ENCODE measurements at regions of chr4 and their contacts with region 1.

Region 1: GRCh38 chr4:62709618-62710252 is 1509.6 kb downstream of the ADGRL3 start:
- DNase-seq: no peak
- H3K4me3 ChIP-seq: no peak overlapping the region
- H3K27ac ChIP-seq: no peak overlapping the region
- H3K4me1 ChIP-seq: no peaks in the 10 kb centered on the region
- H3K27me3 ChIP-seq: no peaks in the 10 kb centered on the region
- CTCF ChIP-seq: no peak
- POLR2A ChIP-seq: no peak

Region 2: GRCh38 chr4:60805500-60806313 is 1904.0 kb before region 1 on chr4:
- CTCF ChIA-PET with region 1: no interaction called
- POLR2A ChIA-PET with region 1: no interaction called
- dilution Hi-C with region 1: no loop called
- intact Hi-C with region 1: loop called (anchors 10 kb)
- DNase-seq: no peak
- H3K4me3 ChIP-seq: no peak overlapping the region
- H3K27ac ChIP-seq: no peak overlapping the region
- H3K4me1 ChIP-seq: no peaks in the 10 kb centered on the region
- H3K27me3 ChIP-seq: no peaks in the 10 kb centered on the region
- CTCF ChIP-seq: peak in 1 of 2 donors; percentile 13
- POLR2A ChIP-seq: no peak

Region 3: DNA sequence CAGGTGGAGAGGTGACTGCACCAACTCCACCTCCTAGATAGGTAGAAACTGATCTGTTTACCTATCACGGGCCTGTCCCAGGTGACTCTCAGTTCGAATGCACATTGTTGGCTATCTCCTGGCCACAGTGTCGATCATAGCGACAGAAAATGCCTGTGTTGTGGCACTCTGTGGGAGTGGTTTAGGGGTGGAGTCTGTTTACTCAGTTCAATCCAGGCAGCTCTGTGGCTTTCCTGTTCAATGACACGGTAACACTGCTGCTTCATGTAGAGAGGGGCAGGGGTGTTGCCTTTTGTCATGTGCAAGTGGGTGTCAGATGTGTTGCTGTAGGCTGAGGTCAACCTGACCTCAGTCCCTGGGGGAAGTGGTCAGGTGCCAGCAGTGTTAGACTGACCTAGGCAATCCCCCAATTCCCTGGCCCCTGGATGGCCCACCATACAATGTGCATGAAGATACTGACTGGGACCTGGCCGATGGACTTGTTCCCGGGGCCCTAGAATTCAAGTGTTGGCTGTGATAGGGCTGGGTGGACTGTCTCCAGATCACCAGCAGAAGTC is 97.2 kb after region 1 on chr4:
- CTCF ChIA-PET with region 1: no interaction called
- POLR2A ChIA-PET with region 1: no interaction called
- dilution Hi-C with region 1: no loop called
- intact Hi-C with region 1: no loop called
- DNase-seq: no peak
- H3K4me3 ChIP-seq: no peak overlapping the region
- H3K27ac ChIP-seq: no peak overlapping the region
- H3K4me1 ChIP-seq: no peaks in the 10 kb centered on the region
- H3K27me3 ChIP-seq: no peaks in the 10 kb centered on the region
- CTCF ChIP-seq: no peak
- POLR2A ChIP-seq: no peak

Region 4: DNA sequence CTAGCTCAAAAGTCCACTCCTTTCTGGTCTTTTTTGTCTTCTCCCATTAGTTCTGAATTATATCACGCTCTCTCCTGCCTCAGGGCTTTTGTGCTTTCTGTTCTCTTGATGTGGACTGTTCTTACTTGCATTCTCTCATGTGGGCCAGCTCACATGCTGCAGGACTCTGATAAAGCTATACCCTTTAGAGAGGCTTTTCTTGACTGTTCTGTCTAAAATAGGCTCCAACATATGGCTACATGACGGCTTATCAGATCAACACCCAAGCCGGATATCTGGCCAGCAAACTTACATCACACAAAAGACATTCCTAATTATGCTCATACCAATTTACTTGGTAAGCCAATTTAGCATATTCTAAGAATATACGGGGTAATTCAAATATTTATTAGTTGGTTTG is 205.0 kb after region 1 on chr4:
- CTCF ChIA-PET with region 1: no interaction called
- POLR2A ChIA-PET with region 1: no interaction called
- dilution Hi-C with region 1: no loop called
- intact Hi-C with region 1: no loop called
- DNase-seq: no peak
- H3K4me3 ChIP-seq: no peak overlapping the region
- H3K27ac ChIP-seq: no peak overlapping the region
- H3K4me1 ChIP-seq: no peaks in the 10 kb centered on the region
- H3K27me3 ChIP-seq: no peaks in the 10 kb centered on the region
- CTCF ChIP-seq: no peak
- POLR2A ChIP-seq: no peak

Measured in endothelial cell of umbilical vein (primary cell).